H1 (cell line): ENCODE measurements at regions of chr1 and their contacts with region 1.

Region 1: GRCh38 chr1:17274186-17275170 is 25.6 kb downstream of the PADI3 start:
- DNase-seq: peak; percentile 59 to 94
- H3K4me3 ChIP-seq: no peak overlapping the region
- H3K27ac ChIP-seq: no peak overlapping the region
- H3K4me1 ChIP-seq: no peaks in the 10 kb centered on the region; a peak in 1 of 7 replicates
- H3K27me3 ChIP-seq: no peaks in the 10 kb centered on the region
- CTCF ChIP-seq: peak; percentile 84 to 93 (median 92)
- EP300 ChIP-seq: no peak
- POLR2A ChIP-seq: no peak
- RAD21 ChIP-seq: peak; percentile 79 to 83

Region 2: DNA sequence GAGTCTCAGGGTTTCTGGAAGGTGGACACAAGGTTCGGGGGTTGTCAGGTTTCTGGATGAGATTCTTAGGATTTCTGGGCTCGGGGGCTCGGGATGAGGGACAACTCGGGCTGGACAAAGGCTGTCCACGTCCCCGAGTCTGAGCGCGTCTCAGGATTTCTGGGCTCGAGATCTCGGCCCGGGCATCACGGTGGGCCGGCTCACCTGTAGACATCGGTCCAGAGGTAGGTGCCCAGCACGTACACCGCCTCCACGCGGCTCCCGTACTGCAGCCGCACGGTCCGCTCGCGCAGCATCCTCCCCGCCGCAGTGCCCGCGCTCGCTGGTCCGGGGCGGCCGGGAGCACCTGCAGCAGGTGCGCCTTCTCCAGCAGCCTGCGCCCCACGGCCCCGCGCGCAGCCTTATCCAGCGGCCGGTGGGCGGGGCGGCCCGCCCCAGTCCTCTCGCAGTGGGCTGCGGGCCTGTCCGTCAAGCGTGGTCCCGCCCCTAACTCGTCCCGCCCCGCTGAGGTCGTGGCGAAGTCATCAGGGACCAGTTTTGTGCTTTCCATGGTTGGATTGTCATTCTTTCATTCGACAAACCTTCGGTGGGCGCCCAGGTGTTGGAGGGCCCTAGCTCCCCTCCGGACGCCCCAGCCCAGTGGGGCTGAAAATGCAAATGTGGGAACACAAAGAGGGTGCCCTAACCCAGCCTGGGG is 155.3 kb before region 1 on chr1 and contains the start of gene PADI2:
- CTCF ChIA-PET with region 1: interaction called, 31 read pairs
- POLR2A ChIA-PET with region 1: no interaction called
- DNase-seq: peak in 1 of 2 experiments; percentile 89
- H3K4me3 ChIP-seq: peak within 1 kb of the TSS; percentile 53 to 78 (median 67)
- H3K27ac ChIP-seq: no peak within 1 kb of the TSS
- H3K4me1 ChIP-seq: peaks cover 0 to 17% (median 5%) of the 10 kb centered on the region in 4 experiments; a peak in 5 of 7 replicates
- H3K27me3 ChIP-seq: peaks cover 16 to 29% (median 24%) of the 10 kb centered on the region in 4 experiments
- CTCF ChIP-seq: no peak
- EP300 ChIP-seq: no peak
- POLR2A ChIP-seq: no peak
- RAD21 ChIP-seq: no peak
- total RNA-seq, gene PADI2: 5.8 and 7.5 TPM in 2 replicates

Region 3: DNA sequence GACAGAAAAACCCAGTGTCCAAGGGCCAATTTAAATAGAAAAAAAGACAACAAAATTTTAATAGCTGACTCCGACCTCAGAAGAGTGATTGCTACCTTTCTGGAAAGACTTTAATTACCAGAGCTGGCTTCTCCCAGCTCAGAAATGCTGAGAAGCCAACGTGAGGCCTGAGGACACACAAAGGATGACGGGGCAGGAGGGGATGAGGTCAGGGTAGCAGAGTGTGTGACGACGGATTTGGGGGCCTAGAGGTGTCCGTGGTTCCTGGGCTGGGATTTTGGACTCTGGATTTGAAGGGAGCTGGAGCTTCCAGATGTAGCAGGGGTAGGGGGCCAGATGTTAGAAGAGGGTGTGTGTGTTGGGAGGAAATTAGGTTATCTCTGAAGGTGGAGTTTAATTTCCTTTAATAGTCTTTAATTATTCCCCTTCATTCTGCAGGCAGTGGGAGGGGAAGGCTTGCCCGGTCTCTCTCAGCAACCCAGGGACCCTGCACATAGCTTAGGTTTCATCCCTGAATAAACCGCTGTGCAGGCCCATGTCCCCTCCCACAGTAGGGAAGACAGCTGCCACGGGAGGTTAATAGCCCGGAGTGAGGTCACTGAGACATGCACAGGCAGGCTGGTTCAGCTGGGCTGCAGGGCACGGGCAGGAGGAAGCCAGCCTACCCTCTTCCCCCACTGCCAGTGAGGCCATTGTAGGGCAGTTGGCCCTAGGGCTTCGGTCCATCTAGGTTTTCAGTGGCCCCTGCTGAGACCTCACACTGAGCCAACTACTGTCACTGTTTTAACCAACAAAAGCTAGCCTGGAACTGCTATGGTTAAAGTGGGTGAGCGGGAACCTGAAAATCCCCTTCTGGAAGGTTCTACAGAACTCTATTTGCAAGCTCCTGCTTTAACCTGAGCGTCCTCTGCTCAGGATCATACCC is 29.4 kb before region 1 on chr1:
- CTCF ChIA-PET with region 1: interaction called, 11 read pairs
- POLR2A ChIA-PET with region 1: no interaction called
- DNase-seq: no peak
- H3K4me3 ChIP-seq: no peak overlapping the region
- H3K27ac ChIP-seq: no peak overlapping the region
- H3K4me1 ChIP-seq: peaks cover 0 to 12% (median 3%) of the 10 kb centered on the region in 4 experiments; a peak in 4 of 7 replicates
- H3K27me3 ChIP-seq: no peaks in the 10 kb centered on the region
- CTCF ChIP-seq: no peak
- EP300 ChIP-seq: no peak
- POLR2A ChIP-seq: no peak
- RAD21 ChIP-seq: no peak

Region 4: DNA sequence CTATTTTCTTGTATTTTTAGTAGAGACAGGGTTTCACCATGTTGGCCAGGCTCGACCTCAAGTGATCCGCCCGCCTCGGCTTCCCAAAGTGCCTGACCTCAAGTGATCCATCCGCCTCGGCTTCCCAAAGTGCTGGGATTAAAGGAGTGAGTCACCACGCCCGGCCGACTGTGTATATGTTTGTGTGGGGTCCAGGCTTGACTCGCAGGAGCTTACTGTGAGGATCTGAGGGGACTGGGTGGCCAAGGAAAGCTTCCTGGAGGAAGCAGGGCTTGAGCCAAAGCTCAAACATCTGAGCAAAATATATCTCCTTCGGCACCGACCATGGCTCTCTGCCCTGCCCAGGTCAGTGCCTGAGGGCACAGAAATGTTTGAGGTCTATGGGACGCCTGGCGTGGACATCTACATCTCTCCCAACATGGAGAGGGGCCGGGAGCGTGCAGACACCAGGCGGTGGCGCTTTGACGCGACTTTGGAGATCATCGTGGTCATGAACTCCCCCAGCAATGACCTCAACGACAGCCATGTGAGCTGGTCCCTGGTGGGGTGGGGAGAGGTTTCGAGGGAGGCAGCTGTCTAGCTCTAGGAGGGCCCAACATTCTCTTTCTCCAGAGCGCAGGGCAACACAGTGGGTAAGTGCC is 15.1 kb before region 1 on chr1:
- CTCF ChIA-PET with region 1: interaction called, 16 read pairs
- POLR2A ChIA-PET with region 1: no interaction called
- DNase-seq: no peak
- H3K4me3 ChIP-seq: no peak overlapping the region
- H3K27ac ChIP-seq: no peak overlapping the region
- H3K4me1 ChIP-seq: no peaks in the 10 kb centered on the region
- H3K27me3 ChIP-seq: peaks cover 0 to 2% (median 0%) of the 10 kb centered on the region in 4 experiments; a peak in 1 of 7 replicates
- CTCF ChIP-seq: no peak
- EP300 ChIP-seq: no peak
- POLR2A ChIP-seq: no peak
- RAD21 ChIP-seq: no peak

Region 5: DNA sequence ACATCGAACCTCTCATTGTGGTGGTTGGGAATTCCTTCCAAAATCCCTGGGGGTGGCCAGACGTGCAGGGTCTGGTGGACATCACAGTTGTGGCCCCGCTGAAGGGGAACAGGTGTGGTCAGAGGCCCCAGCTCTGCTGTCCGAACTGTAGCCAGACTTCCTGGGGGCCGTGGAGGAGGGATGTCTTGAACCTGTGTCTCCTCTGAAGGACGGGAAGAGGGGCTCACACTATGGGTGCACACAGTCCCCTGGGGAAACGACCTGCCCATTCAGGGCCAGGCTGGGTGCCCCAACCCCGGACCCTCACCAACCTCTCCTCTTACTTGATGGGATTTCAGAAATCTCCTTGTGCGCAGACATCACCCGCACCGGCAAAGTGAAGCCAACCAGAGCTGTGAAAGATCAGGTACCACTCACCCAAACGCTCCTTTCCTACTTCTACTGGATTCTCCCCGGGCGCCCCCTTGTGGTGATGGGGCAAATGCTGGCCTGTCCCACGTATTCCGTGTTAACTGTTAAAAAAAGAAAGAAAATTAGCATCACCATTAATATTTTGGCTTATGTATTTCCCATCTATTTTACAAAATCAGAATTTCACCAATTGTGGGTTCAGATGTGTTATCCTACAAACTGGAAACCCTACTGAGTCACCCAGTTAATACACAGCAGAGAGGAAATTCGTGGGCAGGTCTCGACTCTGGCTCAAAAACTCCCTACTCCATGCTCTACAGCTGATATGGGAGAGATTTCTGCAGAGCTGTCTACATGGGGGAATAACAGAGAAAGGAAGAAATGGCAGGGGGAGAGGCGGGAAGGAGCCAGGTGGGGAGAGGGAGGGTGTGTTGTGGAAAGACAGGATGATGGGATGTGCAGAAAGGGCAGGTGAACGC is 61.6 kb after region 1 on chr1:
- CTCF ChIA-PET with region 1: interaction called, 12 read pairs
- POLR2A ChIA-PET with region 1: no interaction called
- DNase-seq: peak; percentile 23 to 96
- H3K4me3 ChIP-seq: no peak overlapping the region
- H3K27ac ChIP-seq: no peak overlapping the region
- H3K4me1 ChIP-seq: no peaks in the 10 kb centered on the region
- H3K27me3 ChIP-seq: peaks cover 0 to 3% (median 0%) of the 10 kb centered on the region in 4 experiments; a peak in 3 of 7 replicates
- CTCF ChIP-seq: peak; percentile 78 to 85 (median 80)
- EP300 ChIP-seq: no peak
- POLR2A ChIP-seq: no peak
- RAD21 ChIP-seq: peak; percentile 72 to 82